ENCODE measurements at regions of chr15 and their contacts with region 1.

Region 1: DNA sequence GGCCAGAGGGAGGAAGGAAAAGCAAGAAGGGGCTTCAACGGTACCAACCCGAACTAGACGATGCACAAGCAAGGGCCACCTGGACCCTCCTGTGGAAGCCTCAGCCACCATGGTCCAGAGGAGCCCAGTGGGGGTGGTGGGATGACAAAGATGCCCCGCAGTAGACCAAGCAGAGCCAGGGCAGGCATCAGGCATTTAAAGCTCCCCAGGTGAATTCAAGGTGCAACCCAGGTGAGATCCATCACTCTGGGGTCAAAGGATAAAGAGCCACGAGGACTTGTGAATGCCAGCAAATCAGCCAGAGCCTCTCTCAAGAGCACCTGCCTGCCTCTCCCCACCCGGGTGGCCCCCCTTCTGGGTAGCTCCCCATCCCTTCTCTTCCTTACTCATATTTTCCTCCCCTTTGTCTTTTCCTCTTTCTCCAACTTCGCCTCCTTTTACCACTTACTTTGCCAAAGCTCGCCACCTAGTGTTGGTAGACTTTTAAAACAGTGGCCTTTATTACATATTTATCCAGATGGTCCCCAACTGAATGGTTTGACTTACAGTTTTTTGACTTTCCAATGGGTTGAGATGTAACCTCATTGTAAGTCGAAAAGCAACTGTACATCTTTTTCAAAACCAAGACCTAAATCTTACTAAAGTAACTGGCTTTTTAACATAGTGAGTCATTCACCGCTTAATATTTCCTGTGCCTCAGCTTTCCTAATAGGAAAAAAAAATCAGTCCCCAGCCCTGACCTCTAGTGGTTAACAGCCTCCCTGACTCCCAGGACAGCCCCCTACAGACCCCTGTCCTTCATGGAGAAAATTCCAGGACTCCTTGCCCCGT is 18.8 kb downstream of the PLA2G4F start:
- DNase-seq: peak in 1 of 2 experiments; percentile 56
- H3K4me3 ChIP-seq: no peak overlapping the region
- H3K27ac ChIP-seq: no peak overlapping the region
- H3K4me1 ChIP-seq: no peaks in the 10 kb centered on the region
- H3K27me3 ChIP-seq: no peaks in the 10 kb centered on the region
- CTCF ChIP-seq: peak; percentile 46 to 64 (median 48)
- EP300 ChIP-seq: no peak
- POLR2A ChIP-seq: no peak
- RAD21 ChIP-seq: peak; percentile 67 to 72

Region 2: DNA sequence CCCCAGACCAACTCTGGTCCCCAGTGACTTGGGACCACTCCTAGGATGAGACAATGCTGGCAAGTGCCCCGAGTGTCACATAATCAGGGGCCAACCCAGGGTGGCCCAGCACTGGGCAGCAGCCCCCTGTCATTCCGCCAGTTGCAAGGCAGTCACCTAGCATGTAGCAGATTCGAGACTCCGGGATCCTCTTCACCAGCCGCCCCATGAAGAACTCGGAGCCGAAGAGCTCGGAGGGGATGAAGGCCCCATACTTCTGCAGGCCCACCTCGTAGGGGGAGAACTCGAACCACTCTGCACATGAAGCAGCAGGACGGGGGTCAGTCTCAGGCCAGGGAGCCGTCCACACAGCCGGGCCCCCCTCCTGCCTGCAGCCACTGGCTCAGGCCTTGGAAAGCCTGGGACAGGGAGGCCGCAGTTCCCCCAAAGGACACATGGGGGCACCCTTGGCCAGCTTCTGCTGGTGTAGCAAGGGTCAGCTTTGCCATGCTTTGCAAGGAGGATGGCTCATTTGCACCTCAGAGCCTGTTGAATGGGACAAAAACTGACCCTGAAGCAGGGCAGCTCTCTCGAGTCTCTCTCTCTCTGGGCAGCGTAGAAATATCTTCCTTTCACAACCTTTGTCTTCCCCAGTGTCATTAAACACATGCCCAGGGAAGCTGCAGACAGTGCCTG is 148.2 kb before region 1 on chr15:
- CTCF ChIA-PET with region 1: interaction called, 37 read pairs
- POLR2A ChIA-PET with region 1: no interaction called
- DNase-seq: peak; percentile 70 to 100
- H3K4me3 ChIP-seq: no peak overlapping the region
- H3K27ac ChIP-seq: no peak overlapping the region
- H3K4me1 ChIP-seq: peaks cover 0 to 5% (median 1%) of the 10 kb centered on the region in 4 experiments; a peak in 4 of 7 replicates
- H3K27me3 ChIP-seq: no peaks in the 10 kb centered on the region
- CTCF ChIP-seq: peak; percentile 98 to 99 (median 98)
- EP300 ChIP-seq: no peak
- POLR2A ChIP-seq: no peak
- RAD21 ChIP-seq: peak; percentile 99 to 100

Region 3: GRCh38 chr15:42020713-42021273 is 116.9 kb before region 1 on chr15 and contains the start of gene PLA2G4E:
- CTCF ChIA-PET with region 1: no interaction called
- POLR2A ChIA-PET with region 1: no interaction called
- DNase-seq: no peak
- H3K4me3 ChIP-seq: no peak within 1 kb of the TSS
- H3K27ac ChIP-seq: no peak within 1 kb of the TSS
- H3K4me1 ChIP-seq: no peaks in the 10 kb centered on the region
- H3K27me3 ChIP-seq: no peaks in the 10 kb centered on the region
- CTCF ChIP-seq: no peak
- EP300 ChIP-seq: no peak
- POLR2A ChIP-seq: no peak
- RAD21 ChIP-seq: no peak
- total RNA-seq, gene PLA2G4E: not detected in 2 replicates

Region 4: DNA sequence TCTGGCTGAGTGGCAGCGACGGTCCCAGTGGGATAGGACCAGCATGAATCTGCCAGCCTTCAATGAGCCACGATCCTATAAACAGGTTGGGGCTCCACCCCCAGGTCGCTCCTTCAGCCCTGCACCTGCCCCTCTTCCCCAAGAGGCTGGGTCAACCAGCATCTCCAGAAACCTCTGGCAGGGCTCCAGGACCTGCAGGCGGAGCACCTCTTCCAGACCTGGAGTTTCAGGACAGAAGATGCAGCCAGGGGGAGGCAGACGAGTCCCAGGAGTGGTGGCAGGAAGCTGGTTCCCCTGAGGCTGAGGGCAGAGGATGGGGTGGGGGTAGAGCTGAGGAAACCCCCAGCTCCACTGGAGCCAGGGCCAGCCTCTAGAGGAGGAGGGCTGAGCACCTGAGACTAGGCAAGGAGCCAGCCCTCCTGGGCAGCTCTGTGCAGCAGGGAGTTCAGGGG is 43.1 kb before region 1 on chr15 and contains the start of gene PLA2G4D:
- CTCF ChIA-PET with region 1: interaction called, 18 read pairs
- POLR2A ChIA-PET with region 1: no interaction called
- DNase-seq: no peak
- H3K4me3 ChIP-seq: no peak within 1 kb of the TSS
- H3K27ac ChIP-seq: no peak within 1 kb of the TSS
- H3K4me1 ChIP-seq: peaks cover 0 to 5% (median 2%) of the 10 kb centered on the region in 4 experiments; a peak in 4 of 7 replicates
- H3K27me3 ChIP-seq: no peaks in the 10 kb centered on the region; a peak in 1 of 7 replicates
- CTCF ChIP-seq: peak in 1 of 3 experiments; percentile 20; a peak in 1 of 4 replicates
- EP300 ChIP-seq: no peak
- POLR2A ChIP-seq: no peak
- RAD21 ChIP-seq: no peak; a peak in 1 of 4 replicates
- total RNA-seq, gene PLA2G4D: 0.07 and 0.33 TPM in 2 replicates

Region 5: GRCh38 chr15:42118650-42119445 is 18.8 kb before region 1 on chr15:
- CTCF ChIA-PET with region 1: interaction called, 42 read pairs
- POLR2A ChIA-PET with region 1: interaction called, 4 read pairs
- DNase-seq: no peak
- H3K4me3 ChIP-seq: no peak overlapping the region; a peak in 1 of 8 replicates
- H3K27ac ChIP-seq: no peak overlapping the region
- H3K4me1 ChIP-seq: peaks cover 0 to 6% (median under 1%) of the 10 kb centered on the region in 4 experiments; a peak in 3 of 7 replicates
- H3K27me3 ChIP-seq: no peaks in the 10 kb centered on the region
- CTCF ChIP-seq: no peak
- EP300 ChIP-seq: no peak
- POLR2A ChIP-seq: no peak
- RAD21 ChIP-seq: no peak

Measured in H1 (cell line).